ENCODE measurements at regions of chr1 and their contacts with region 1.

Region 1: DNA sequence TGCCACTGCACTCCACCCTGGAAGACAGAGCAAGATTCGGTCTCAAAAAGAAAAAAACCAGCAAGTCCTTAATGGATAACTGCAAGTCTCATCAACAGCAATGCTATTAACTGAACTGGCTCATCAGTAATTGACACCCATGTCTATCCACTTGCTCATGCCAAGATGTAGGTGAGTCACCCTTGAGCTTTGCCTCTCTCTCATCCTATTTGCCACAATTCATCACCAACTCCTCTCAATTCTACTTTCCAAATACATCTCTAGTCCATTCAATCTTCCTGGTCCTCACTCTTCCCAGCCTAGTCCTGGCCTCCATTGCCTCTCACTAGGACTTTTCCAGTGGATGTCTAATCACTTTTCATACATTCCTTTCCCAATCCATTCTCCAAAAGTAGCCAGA is 103.7 kb upstream of the PRMT6 start:
- DNase-seq: peak; percentile 23
- H3K4me3 ChIP-seq: no peak overlapping the region
- H3K27ac ChIP-seq: no peak overlapping the region
- H3K4me1 ChIP-seq: no peaks in the 10 kb centered on the region
- H3K27me3 ChIP-seq: peaks cover 4% of the 10 kb centered on the region
- CTCF ChIP-seq: no peak

Region 2: GRCh38 chr1:106879538-106879937 is 73.2 kb before region 1 on chr1:
- CTCF ChIA-PET with region 1: no interaction called
- dilution Hi-C with region 1: loop called (anchors 5 kb)
- in situ Hi-C with region 1: no loop called
- intact Hi-C with region 1: no loop called
- DNase-seq: no peak
- H3K4me3 ChIP-seq: no peak overlapping the region
- H3K27ac ChIP-seq: no peak overlapping the region
- H3K4me1 ChIP-seq: no peaks in the 10 kb centered on the region
- H3K27me3 ChIP-seq: no peaks in the 10 kb centered on the region
- CTCF ChIP-seq: no peak

Region 3: DNA sequence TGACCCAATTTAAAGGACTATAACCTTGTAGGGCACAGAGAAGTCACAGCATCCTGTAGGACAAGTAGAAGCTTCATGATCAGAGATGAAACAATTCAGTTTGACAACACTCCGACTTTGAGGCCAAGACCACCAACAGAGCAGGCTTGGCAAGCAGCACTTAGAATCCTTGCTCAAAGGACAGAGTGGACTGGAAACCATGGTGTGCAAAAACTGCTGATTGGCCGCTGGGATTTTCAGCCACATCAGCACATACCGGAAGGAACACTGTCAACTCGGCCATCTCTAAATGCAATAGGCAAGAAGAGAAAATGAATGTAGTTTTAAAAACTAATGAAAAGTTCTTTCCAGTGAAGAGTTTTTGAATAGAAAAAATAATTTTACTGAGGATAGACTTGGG is 11.7 kb after region 1 on chr1:
- CTCF ChIA-PET with region 1: no interaction called
- dilution Hi-C with region 1: no loop called
- in situ Hi-C with region 1: no loop called
- intact Hi-C with region 1: no loop called
- DNase-seq: no peak
- H3K4me3 ChIP-seq: no peak overlapping the region
- H3K27ac ChIP-seq: no peak overlapping the region
- H3K4me1 ChIP-seq: no peaks in the 10 kb centered on the region
- H3K27me3 ChIP-seq: peaks cover 6% of the 10 kb centered on the region
- CTCF ChIP-seq: no peak